Right ventricle myocardium inferior (tissue), 1 donor: ENCODE measurements at regions of chr2 and their contacts with region 1.

Region 1: DNA sequence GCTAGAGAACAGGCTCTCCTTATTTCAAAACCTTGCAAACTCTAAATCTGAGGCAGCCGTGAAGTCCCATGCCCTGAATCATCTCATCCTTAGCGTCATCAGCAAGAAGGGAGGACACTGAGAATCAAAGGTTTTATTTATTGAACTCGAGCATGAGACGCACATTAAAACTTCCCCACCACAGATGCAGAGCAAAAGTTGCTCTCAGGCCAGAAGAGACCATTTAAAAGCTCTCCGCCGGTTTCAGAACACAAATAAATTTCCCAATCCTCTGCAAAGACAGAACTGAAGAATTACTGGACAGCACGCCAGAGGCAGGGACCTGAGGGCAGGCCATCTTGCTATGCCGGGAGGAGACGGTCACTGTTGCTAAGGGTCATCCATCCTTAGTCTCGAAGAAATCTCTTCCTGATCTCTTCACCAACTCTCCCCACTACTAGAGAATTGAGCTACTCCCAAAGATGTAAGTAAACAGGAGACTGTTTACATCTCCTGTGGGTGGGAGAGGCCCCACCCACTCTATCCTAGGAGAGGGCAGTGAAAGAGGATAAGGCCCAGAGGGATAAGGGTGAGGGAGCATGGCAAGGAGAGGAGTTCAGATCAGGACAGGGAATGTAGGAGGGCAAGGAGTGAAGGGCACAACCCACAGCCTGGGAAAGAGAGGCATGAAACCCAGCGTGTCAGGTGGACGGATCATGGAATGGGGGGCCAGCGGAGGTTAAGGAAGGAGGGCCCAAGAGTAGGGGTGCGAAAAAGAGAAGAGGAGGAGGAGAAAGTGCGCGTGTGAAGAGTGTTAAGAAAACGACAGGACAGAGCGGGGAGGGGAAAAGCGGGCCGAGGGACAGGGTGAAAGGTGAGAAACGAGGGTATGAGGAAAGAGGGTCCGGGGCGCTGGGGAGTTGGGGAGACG is 1.1 kb downstream of the AMMECR1L start:
- DNase-seq: no peak
- ATAC-seq: no peak

Region 2: GRCh38 chr2:127986548-127987079 is 101.9 kb after region 1 on chr2:
- intact Hi-C with region 1: loop called (anchors 5 kb)
- DNase-seq: no peak
- ATAC-seq: peak; percentile 63

Region 3: DNA sequence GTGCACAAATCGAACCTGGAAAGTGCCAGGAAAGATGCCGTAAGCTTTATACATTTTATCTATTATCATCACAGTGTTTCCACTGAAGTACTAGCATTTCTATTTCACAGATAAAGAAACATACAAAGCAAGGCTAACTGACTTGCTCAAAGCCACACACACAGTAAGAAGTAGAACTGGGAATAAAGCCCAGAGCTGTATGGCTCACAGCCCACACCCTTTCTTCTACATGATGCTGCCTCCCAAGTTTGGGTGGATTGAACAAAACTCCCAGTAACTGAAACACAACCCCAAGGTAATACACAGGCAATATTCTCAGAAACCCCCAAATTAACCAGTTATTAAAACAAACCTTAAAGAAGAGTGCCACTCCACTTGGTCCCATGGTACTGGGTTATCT is 131.9 kb after region 1 on chr2:
- intact Hi-C with region 1: no loop called
- DNase-seq: no peak
- ATAC-seq: no peak

Region 4: GRCh38 chr2:128090945-128091725 is 206.4 kb after region 1 on chr2 and contains the start of gene UGGT1:
- intact Hi-C with region 1: loop called (anchors 10 kb)
- DNase-seq: peak; percentile 97
- ATAC-seq: peak; percentile 100
- total RNA-seq, gene UGGT1: 24.3 TPM